Aorta (tissue), 5 donors: ENCODE measurements at regions of chr6 and their contacts with region 1.

Region 1: DNA sequence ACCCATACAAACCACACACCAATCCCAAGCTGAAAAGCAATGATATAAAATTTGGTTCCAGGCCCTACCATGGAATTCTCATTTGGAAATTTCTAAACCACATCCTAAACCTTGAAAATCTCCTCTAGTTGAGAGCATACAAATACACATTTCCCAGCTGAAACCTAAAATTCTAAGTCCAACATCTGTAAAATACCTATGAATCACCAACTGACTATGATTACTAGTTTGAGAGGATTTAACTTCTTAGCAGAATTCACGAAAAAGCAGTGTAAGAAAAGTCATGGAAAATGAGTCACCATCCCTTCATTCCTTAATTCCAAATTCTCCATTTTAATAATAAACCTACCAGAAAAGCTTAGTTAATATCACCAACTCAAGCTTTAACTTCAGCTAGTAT is 15.4 kb downstream of the RANBP9 start:
- DNase-seq: no peak
- ATAC-seq: no peak
- H3K4me3 ChIP-seq: no peak overlapping the region
- H3K27ac ChIP-seq: peak overlapping the region in 1 of 2 donors; percentile 76
- H3K4me1 ChIP-seq: peaks cover 1 to 10% of the 10 kb centered on the region in 2 donors
- H3K27me3 ChIP-seq: no peaks in the 10 kb centered on the region

Region 2: DNA sequence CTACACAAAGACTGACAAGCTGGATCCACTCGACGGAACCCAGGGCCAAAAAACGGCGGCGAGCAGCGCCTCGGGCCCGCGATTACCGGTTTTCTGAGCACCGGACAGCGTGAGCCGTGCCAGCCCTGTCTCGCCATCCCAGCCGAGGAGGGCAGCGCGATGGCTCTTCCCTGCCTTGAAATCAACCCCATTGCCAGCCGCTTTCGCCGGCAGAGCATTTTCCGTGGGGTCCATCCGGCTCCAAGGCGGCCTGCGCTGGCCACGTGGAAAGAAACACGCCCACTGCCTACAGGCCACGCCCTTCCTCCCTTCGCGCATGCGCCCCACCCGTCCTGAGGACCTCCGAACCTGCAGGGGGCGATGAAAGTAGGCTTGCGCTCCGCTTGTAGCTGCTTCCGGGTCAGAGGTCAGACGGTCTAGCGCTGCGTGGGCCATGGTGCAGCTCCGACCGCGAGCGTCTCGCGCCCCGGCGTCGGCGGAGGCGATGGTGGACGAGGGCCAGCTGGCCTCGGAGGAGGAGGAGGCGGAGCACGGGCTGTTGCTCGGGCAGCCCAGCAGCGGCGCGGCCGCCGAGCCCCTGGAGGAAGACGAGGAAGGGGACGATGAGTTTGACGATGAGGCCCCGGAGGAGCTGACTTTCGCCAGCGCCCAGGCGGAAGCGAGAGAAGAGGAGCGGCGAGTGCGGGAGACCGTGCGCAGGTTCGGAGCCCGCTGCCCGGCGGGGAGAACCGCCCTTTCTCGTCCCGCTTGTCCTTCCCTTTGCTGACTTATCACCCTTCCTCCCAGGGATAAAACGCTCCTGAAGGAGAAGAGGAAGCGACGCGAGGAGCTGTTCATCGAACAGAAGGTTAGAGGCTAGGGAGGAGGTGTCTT is 81.1 kb before region 1 on chr6 and contains the start of gene NOL7:
- intact Hi-C with region 1: no loop called
- DNase-seq: peak; percentile 98 to 99
- ATAC-seq: peak; percentile 99
- H3K4me3 ChIP-seq: peak within 1 kb of the TSS; percentile 55 to 74
- H3K27ac ChIP-seq: peak within 1 kb of the TSS; percentile 78 to 80
- H3K4me1 ChIP-seq: peaks cover 0 to 3% of the 10 kb centered on the region in 2 donors
- H3K27me3 ChIP-seq: no peaks in the 10 kb centered on the region
- total RNA-seq, gene NOL7: 47.4 to 54.0 TPM

Region 3: GRCh38 chr6:13641315-13641714 is 54.9 kb before region 1 on chr6:
- intact Hi-C with region 1: loop called in 1 of 2 experiments (anchors 10 kb)
- DNase-seq: no peak
- ATAC-seq: peak; percentile 48
- H3K4me3 ChIP-seq: no peak overlapping the region
- H3K27ac ChIP-seq: peak overlapping the region in 1 of 2 donors; percentile 76
- H3K4me1 ChIP-seq: no peaks in the 10 kb centered on the region
- H3K27me3 ChIP-seq: no peaks in the 10 kb centered on the region

Region 4: DNA sequence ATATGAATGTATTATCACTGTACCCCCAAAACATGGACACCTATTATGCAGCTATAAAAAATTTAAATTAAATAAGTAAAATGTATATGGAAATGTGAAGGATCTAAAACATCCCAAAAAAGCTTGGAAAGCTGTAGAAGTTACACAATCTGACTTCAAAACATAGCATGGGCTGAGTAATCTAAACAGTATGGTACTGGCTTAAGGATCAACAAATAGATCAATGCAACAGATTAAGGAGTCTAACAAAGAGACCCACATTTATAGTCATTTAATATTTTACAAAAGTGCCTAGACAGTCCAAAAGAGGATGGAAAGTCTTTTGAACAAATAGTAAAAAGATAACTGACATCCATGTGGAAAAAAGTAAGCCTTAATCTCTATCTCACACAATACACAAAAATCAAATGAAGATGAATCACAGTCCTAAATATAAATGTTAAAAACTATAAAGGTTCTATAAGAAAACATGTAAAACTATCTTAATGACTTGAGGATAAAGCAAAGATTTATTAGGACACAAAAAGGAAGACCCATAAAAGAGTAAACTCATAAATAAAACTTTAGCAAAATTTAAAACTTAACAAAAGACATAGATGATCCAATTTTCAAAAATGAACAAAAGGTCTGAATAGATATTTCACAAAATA is 31.4 kb before region 1 on chr6:
- intact Hi-C with region 1: loop called in 1 of 2 experiments (anchors 5 kb)
- DNase-seq: no peak
- ATAC-seq: no peak
- H3K4me3 ChIP-seq: no peak overlapping the region
- H3K27ac ChIP-seq: no peak overlapping the region
- H3K4me1 ChIP-seq: peaks cover 0 to 5% of the 10 kb centered on the region in 2 donors
- H3K27me3 ChIP-seq: no peaks in the 10 kb centered on the region

Region 5: DNA sequence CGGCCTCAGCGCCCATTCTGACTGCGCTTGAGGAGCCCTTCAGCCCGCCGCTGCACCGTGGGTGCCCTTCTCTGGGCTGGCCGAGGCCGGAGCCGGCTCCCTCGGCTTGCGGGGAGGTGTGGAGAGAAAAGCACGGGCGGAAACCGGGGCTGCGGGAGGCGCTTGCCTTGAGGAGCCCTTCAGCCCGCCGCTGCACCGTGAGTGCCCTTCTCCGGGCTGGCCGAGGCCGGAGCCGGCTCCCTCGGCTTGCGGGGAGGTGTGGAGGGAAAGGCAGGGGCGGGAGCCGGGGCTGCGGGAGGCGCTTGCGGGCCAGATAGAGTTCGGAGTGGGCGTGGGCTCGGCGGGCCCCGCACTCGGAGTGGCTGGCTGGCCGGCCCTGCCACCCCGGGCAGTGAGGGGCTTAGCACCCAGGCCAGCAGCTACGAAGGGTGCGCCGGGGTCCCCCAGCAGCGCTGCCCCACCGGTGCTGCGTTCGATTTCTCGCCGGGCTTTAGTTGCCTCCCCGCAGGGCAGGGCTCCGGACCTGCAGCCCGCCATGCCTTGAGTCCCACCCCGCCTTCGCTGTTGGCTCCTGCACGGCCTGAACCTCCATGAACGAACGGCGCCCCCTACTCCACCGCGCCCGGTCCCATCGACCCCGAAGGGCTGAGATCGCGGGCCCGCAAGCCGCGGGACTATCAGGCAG is 163.8 kb after region 1 on chr6:
- intact Hi-C with region 1: no loop called
- DNase-seq: no peak
- ATAC-seq: no peak
- H3K4me3 ChIP-seq: no peak overlapping the region
- H3K27ac ChIP-seq: no peak overlapping the region
- H3K4me1 ChIP-seq: no peaks in the 10 kb centered on the region
- H3K27me3 ChIP-seq: no peaks in the 10 kb centered on the region